ENCODE measurements at regions of chr4 and their contacts with region 1.

Region 1: DNA sequence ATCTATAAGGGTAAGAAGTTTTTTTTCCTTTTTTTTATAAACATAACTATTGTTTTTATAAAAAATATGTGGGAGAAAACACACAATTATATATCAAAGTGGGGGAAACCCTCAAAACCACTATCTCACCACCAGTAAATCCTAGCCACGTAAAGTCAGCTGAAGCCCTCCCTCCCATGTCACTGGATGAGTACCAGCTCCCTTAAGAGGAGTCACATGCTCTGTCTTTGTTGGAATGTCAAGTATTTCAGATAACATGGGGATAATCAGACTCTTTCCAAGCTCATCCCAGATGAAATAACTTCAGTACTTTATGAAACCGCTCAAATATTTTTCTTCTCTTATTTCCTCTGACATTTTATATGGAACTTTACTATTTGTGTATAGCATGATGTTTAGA is 2.4 kb downstream of the MYOZ2 start:
- DNase-seq: no peak
- ATAC-seq: peak; percentile 71 to 78

Region 2: DNA sequence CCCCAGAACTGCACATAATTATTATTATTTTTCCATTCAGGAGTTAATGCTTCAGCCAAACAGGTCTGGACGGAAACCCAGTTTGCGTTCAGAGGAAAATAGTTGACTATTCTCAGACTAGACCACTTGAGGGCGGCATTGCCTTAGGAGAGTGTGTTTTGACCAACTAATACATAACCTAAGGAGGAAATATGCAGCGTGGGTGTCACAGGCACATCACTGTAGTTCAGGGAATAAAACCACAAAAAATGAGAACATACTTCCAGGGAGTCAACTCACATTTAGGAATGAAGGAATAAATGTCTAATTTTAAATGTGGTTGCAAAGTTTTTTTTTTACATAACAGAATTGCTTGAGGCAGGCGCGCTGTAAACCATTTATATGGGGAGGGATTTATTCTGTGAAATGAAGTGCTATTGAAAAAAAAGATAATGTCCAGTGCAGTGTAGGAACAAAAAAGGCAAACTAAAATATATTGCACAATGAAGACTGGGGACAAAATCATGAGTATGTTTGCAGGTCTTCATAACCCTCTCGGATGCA is 156.1 kb before region 1 on chr4:
- intact Hi-C with region 1: loop called in 1 of 2 experiments (anchors 10 kb)
- DNase-seq: peak; percentile 60
- ATAC-seq: peak; percentile 84 to 89

Measured in left cardiac atrium (tissue), 4 donors.